Caco-2 (cell line): ENCODE measurements at regions of chr2 and their contacts with region 1.

Region 1: DNA sequence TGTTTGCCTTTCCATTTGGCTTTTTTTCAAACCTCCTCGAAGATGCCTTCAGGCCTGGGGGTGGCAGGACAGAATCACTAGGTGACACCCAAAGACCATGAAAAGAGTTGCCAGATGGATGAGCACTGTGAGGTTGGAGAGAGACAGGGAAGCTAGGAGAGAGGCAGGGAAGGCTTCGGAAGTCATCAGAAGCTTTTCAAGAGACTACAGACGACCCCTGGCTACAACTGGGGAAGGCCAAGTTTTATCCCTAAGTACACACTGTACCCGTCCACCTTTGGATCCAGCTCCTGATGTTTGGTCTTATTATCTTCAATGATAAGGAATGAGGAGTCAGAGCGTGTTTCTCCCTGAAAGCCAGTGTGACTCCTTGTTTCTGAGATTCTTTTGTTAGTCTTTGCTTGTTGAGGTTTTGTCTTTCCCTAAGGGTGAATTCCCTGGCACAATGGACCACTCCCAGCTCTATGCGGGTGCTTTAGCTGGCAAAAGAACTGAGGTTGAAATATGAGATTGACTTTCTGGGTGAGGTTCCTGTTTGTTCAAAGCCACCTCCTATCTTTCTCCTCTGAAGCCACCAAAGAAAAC is 33.4 kb upstream of the SLC9A2 start:
- DNase-seq: peak; percentile 84 to 90
- H3K4me3 ChIP-seq: no peak overlapping the region
- H3K4me3 Mint-ChIP-seq: peak overlapping the region; percentile 45
- H3K27ac Mint-ChIP-seq: peak overlapping the region; percentile 82
- H3K4me1 ChIP-seq: peaks cover 37% of the 10 kb centered on the region
- H3K4me1 Mint-ChIP-seq: peaks cover 16% of the 10 kb centered on the region
- H3K27me3 ChIP-seq: no peaks in the 10 kb centered on the region
- H3K27me3 Mint-ChIP-seq: no peaks in the 10 kb centered on the region
- CTCF ChIP-seq: peak; percentile 26 to 60

Region 2: GRCh38 chr2:101912545-101912944 is 673.4 kb before region 1 on chr2:
- CTCF ChIA-PET with region 1: no interaction called
- POLR2A ChIA-PET with region 1: no interaction called
- intact Hi-C with region 1: no loop called
- DNase-seq: no peak
- H3K4me3 ChIP-seq: no peak overlapping the region
- H3K4me3 Mint-ChIP-seq: no peak overlapping the region
- H3K27ac Mint-ChIP-seq: no peak overlapping the region
- H3K4me1 ChIP-seq: no peaks in the 10 kb centered on the region
- H3K4me1 Mint-ChIP-seq: no peaks in the 10 kb centered on the region
- H3K27me3 ChIP-seq: no peaks in the 10 kb centered on the region
- H3K27me3 Mint-ChIP-seq: no peaks in the 10 kb centered on the region
- CTCF ChIP-seq: no peak

Region 3: GRCh38 chr2:102268510-102269209 is 317.3 kb before region 1 on chr2:
- CTCF ChIA-PET with region 1: no interaction called
- POLR2A ChIA-PET with region 1: no interaction called
- intact Hi-C with region 1: no loop called
- DNase-seq: no peak
- H3K4me3 ChIP-seq: no peak overlapping the region
- H3K4me3 Mint-ChIP-seq: no peak overlapping the region
- H3K27ac Mint-ChIP-seq: no peak overlapping the region
- H3K4me1 ChIP-seq: no peaks in the 10 kb centered on the region
- H3K4me1 Mint-ChIP-seq: no peaks in the 10 kb centered on the region
- H3K27me3 ChIP-seq: no peaks in the 10 kb centered on the region
- H3K27me3 Mint-ChIP-seq: peaks cover 8% of the 10 kb centered on the region
- CTCF ChIP-seq: no peak

Region 4: GRCh38 chr2:102520028-102520427 is 65.9 kb before region 1 on chr2:
- CTCF ChIA-PET with region 1: no interaction called
- POLR2A ChIA-PET with region 1: no interaction called
- intact Hi-C with region 1: loop called (anchors 2 kb)
- DNase-seq: peak; percentile 34 to 46
- H3K4me3 ChIP-seq: no peak overlapping the region
- H3K4me3 Mint-ChIP-seq: no peak overlapping the region
- H3K27ac Mint-ChIP-seq: no peak overlapping the region
- H3K4me1 ChIP-seq: peaks cover 57% of the 10 kb centered on the region
- H3K4me1 Mint-ChIP-seq: peaks cover 31% of the 10 kb centered on the region
- H3K27me3 ChIP-seq: no peaks in the 10 kb centered on the region
- H3K27me3 Mint-ChIP-seq: no peaks in the 10 kb centered on the region
- CTCF ChIP-seq: peak; percentile 54 to 55

Region 5: GRCh38 chr2:102575888-102576287 is 10.1 kb before region 1 on chr2:
- CTCF ChIA-PET with region 1: no interaction called
- POLR2A ChIA-PET with region 1: no interaction called
- intact Hi-C with region 1: no loop called
- DNase-seq: no peak
- H3K4me3 ChIP-seq: no peak overlapping the region
- H3K4me3 Mint-ChIP-seq: no peak overlapping the region
- H3K27ac Mint-ChIP-seq: no peak overlapping the region
- H3K4me1 ChIP-seq: no peaks in the 10 kb centered on the region
- H3K4me1 Mint-ChIP-seq: peaks cover 7% of the 10 kb centered on the region
- H3K27me3 ChIP-seq: no peaks in the 10 kb centered on the region
- H3K27me3 Mint-ChIP-seq: no peaks in the 10 kb centered on the region
- CTCF ChIP-seq: no peak

Region 6: GRCh38 chr2:102615622-102616436 is 29.9 kb after region 1 on chr2:
- CTCF ChIA-PET with region 1: interaction called, 105 read pairs
- POLR2A ChIA-PET with region 1: interaction called, 6 read pairs
- intact Hi-C with region 1: loop called (anchors 1 kb)
- DNase-seq: peak; percentile 70 to 73
- H3K4me3 ChIP-seq: no peak overlapping the region
- H3K4me3 Mint-ChIP-seq: no peak overlapping the region
- H3K27ac Mint-ChIP-seq: no peak overlapping the region
- H3K4me1 ChIP-seq: peaks cover 15% of the 10 kb centered on the region; the same call in 1 of the 2 replicates
- H3K4me1 Mint-ChIP-seq: peaks cover 6% of the 10 kb centered on the region
- H3K27me3 ChIP-seq: no peaks in the 10 kb centered on the region
- H3K27me3 Mint-ChIP-seq: no peaks in the 10 kb centered on the region
- CTCF ChIP-seq: peak; percentile 95 to 96

Region 7: DNA sequence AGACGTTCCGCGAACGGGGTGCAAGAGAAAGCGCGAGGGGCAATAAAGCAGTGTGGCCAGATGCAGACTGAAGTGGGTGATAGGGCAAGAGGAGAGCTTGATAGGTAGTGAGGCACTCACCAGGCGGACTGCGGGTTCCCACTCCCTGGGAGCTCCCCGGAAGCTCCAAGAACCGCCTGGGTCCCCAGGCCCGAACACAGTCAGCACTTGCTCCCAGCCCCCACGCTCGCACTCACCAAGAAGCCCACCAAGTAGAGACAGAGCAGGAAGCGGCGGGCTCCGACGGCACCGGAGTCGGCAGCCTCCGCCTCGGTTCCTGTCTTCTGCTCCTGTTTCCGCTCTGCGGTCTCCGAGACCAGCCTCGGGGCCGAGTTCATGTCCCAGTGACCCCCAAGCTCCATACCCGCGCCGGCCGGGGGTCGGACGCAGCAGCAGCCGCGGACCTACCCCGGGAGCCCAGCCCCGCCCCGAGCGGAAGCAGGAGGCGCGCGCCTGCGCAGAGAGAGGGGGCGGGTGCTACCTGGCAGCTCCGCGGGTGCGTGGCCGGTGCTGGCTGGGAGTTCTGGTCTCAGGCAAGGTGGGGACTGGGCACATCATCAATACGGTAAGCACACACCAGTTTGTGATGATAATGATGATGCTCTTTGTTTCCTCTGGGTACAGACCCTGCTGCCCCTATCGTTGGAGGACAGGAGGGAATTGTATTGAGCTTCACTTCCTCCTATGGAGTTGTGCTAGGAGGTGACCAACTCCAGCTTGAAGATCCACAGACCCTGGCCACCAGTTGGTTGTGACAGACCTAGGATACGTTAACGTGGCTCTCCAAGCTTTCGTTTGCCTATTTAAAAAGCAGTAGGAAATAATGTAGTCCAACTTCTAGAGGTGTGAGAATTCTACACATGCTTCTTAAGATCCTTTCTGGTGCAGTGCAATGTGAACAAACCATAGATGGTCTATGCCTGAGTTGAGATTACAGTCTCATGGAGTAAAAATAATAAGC is 150.8 kb after region 1 on chr2:
- CTCF ChIA-PET with region 1: interaction called, 7 read pairs
- POLR2A ChIA-PET with region 1: no interaction called
- intact Hi-C with region 1: loop called (anchors 5 kb)
- DNase-seq: peak; percentile 81 to 91
- H3K4me3 ChIP-seq: peak overlapping the region; percentile 72
- H3K4me3 Mint-ChIP-seq: peak overlapping the region; percentile 94
- H3K27ac Mint-ChIP-seq: peak overlapping the region; percentile 93
- H3K4me1 ChIP-seq: no peaks in the 10 kb centered on the region
- H3K4me1 Mint-ChIP-seq: no peaks in the 10 kb centered on the region
- H3K27me3 ChIP-seq: no peaks in the 10 kb centered on the region
- H3K27me3 Mint-ChIP-seq: no peaks in the 10 kb centered on the region
- CTCF ChIP-seq: no peak